PC-9 (cell line): ENCODE measurements at regions of chr7 and their contacts with region 1.

Region 1: DNA sequence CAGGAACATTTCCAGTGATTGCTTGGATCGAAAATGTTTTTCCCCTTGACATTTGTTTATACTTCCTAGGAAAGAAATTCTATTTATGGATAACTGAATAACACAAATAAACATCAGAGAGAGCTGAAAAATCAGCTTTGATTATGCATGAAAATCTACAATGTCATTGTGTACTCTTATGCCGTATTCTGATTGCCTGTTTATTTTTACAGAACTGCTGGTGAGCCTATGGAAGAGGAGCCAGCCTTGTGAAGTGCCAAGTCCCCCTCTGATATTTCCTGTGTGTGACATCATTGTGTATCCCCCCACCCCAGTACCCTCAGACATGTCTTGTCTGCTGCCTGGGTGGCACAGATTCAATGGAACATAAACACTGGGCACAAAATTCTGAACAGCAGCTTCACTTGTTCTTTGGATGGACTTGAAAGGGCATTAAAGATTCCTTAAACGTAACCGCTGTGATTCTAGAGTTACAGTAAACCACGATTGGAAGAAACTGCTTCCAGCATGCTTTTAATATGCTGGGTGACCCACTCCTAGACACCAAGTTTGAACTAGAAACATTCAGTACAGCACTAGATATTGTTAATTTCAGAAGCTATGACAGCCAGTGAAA is 121.5 kb downstream of the TWIST1 start:
- DNase-seq: no peak
- H3K4me3 ChIP-seq: no peak overlapping the region
- H3K27ac ChIP-seq: no peak overlapping the region
- H3K4me1 ChIP-seq: no peaks in the 10 kb centered on the region
- H3K27me3 ChIP-seq: no peaks in the 10 kb centered on the region
- CTCF ChIP-seq: no peak

Region 2: DNA sequence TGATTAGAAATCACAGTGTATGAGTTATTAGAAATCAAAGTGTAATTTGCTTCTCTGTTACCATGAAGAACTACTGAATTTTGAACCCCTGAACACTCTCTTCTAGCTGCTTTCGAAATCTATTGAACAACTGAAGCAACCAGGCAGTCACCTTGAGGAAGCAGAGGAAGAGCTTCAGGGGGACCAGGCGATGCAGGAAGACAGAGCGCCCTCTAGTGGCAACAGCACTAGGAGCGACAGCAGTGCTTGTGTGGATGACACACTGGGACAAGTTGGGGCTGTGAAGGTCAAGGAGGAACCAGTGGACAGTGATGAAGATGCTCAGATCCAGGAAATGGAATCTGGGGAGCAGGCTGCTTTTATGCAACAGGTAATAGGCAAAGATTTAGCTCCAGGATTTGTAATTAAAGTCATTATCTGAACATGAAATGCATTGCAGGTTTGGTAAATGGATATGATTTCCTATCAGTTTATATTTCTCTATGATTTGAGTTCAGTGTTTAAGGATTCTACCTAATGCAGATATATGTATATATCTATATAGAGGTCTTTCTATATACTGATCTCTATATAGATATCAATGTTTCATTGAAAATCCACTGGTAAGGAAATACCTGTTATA is 329.7 kb before region 1 on chr7:
- CTCF ChIA-PET with region 1: no interaction called
- POLR2A ChIA-PET with region 1: interaction called, 13 read pairs
- intact Hi-C with region 1: no loop called
- DNase-seq: peak; percentile 57 to 73
- H3K4me3 ChIP-seq: no peak overlapping the region
- H3K27ac ChIP-seq: no peak overlapping the region
- H3K4me1 ChIP-seq: no peaks in the 10 kb centered on the region
- H3K27me3 ChIP-seq: no peaks in the 10 kb centered on the region
- CTCF ChIP-seq: peak; percentile 99

Region 3: DNA sequence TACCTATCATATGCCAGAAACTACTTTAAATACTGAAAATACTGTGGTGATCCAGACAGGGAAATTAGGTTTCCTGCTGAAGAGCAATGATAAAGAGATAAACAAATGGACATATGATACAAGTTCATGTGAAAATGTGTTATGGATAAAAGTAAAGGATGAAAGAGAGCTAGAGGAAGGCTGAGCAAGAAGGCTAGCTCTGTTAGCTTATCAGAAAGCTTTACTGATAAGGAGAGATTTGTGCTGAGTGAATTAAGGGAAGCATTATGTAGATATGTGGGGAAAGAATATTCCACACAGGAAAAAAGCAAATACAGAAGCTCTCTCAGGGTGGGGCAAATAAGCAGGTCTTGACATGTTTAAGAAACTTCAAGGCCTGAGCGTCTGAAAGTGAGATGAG is 192.0 kb before region 1 on chr7:
- CTCF ChIA-PET with region 1: no interaction called
- POLR2A ChIA-PET with region 1: no interaction called
- intact Hi-C with region 1: no loop called
- DNase-seq: no peak
- H3K4me3 ChIP-seq: no peak overlapping the region
- H3K27ac ChIP-seq: no peak overlapping the region
- H3K4me1 ChIP-seq: no peaks in the 10 kb centered on the region
- H3K27me3 ChIP-seq: no peaks in the 10 kb centered on the region
- CTCF ChIP-seq: no peak

Region 4: DNA sequence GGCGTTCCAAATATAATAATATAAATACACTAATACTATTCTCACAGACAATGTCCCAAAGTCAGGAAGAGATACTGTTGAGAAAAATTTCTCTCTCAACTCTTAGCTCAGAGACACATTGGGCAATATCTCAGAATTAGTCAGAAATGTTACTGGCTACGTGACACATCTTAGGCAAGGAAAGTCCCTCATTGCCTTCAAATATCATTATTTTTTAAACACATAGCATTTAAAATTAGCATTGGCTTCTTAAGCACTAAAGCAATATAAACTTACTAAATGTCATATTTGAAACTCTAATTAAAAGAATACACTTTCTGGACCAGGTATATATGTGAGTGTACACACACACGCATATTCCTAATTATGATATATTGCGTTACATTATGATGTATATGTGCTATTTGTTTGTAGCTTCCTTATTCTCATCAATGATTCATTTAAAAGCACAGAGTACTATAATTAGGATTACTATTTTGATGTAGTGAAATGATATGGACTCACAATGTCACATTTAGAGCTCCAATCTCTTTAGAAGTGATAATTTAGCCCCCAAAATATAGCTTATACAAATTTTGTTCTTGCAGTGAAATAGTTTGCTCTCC is 134.3 kb before region 1 on chr7:
- CTCF ChIA-PET with region 1: no interaction called
- POLR2A ChIA-PET with region 1: no interaction called
- intact Hi-C with region 1: loop called (anchors 5 kb)
- DNase-seq: no peak
- H3K4me3 ChIP-seq: no peak overlapping the region
- H3K27ac ChIP-seq: no peak overlapping the region
- H3K4me1 ChIP-seq: peaks cover 4% of the 10 kb centered on the region
- H3K27me3 ChIP-seq: no peaks in the 10 kb centered on the region
- CTCF ChIP-seq: no peak

Region 5: GRCh38 chr7:19024261-19024660 is 28.3 kb after region 1 on chr7:
- CTCF ChIA-PET with region 1: no interaction called
- POLR2A ChIA-PET with region 1: no interaction called
- intact Hi-C with region 1: no loop called
- DNase-seq: peak in 1 of 2 experiments; percentile 33
- H3K4me3 ChIP-seq: no peak overlapping the region
- H3K27ac ChIP-seq: no peak overlapping the region
- H3K4me1 ChIP-seq: 0 out of 2 replicates have a peak, but pooled peaks cover 5% of the 10 kb centered on the region
- H3K27me3 ChIP-seq: no peaks in the 10 kb centered on the region
- CTCF ChIP-seq: no peak